ENCODE measurements at regions of chr15 and their contacts with region 1.

Region 1: GRCh38 chr15:98154864-98155263 is 194.4 kb downstream of the ARRDC4 start:
- DNase-seq: no peak
- ATAC-seq: no peak
- H3K4me3 ChIP-seq: no peak overlapping the region
- H3K27ac ChIP-seq: no peak overlapping the region
- H3K4me1 ChIP-seq: no peaks in the 10 kb centered on the region
- H3K27me3 ChIP-seq: peaks cover 0 to 3% (median 0%) of the 10 kb centered on the region in 7 donors
- CTCF ChIP-seq: no peak

Region 2: GRCh38 chr15:96381463-96381862 is 1773.4 kb before region 1 on chr15:
- intact Hi-C with region 1: loop called in 1 of 10 experiments (anchors 5 kb)
- DNase-seq: no peak
- ATAC-seq: no peak
- H3K4me3 ChIP-seq: no peak overlapping the region
- H3K27ac ChIP-seq: no peak overlapping the region
- H3K4me1 ChIP-seq: no peaks in the 10 kb centered on the region
- H3K27me3 ChIP-seq: no peaks in the 10 kb centered on the region
- CTCF ChIP-seq: no peak

Region 3: GRCh38 chr15:97840501-97840900 is 314.4 kb before region 1 on chr15:
- intact Hi-C with region 1: no loop called
- DNase-seq: no peak
- ATAC-seq: no peak
- H3K4me3 ChIP-seq: no peak overlapping the region
- H3K27ac ChIP-seq: no peak overlapping the region
- H3K4me1 ChIP-seq: no peaks in the 10 kb centered on the region
- H3K27me3 ChIP-seq: no peaks in the 10 kb centered on the region
- CTCF ChIP-seq: no peak

Region 4: GRCh38 chr15:97858296-97858695 is 296.6 kb before region 1 on chr15:
- intact Hi-C with region 1: no loop called
- DNase-seq: no peak
- ATAC-seq: no peak
- H3K4me3 ChIP-seq: no peak overlapping the region
- H3K27ac ChIP-seq: no peak overlapping the region
- H3K4me1 ChIP-seq: no peaks in the 10 kb centered on the region
- H3K27me3 ChIP-seq: no peaks in the 10 kb centered on the region
- CTCF ChIP-seq: no peak

Measured in heart right ventricle (tissue), 16 donors.